Esophagus muscularis mucosa (tissue), 4 donors: ENCODE measurements at regions of chr12 and their contacts with region 1.

Region 1: GRCh38 chr12:98424726-98425401 is 90.5 kb upstream of the TMPO start:
- DNase-seq: peak; percentile 92
- H3K4me3 ChIP-seq: no peak overlapping the region
- H3K27ac ChIP-seq: no peak overlapping the region
- H3K4me1 ChIP-seq: peaks cover 5 to 18% (median 17%) of the 10 kb centered on the region in 4 donors
- H3K27me3 ChIP-seq: no peaks in the 10 kb centered on the region
- CTCF ChIP-seq: peak; percentile 65 to 76 (median 72)
- EP300 ChIP-seq: no peak
- POLR2A ChIP-seq: no peak

Region 2: GRCh38 chr12:98475565-98475908 is 50.7 kb after region 1 on chr12:
- intact Hi-C with region 1: no loop called
- DNase-seq: no peak
- H3K4me3 ChIP-seq: no peak overlapping the region
- H3K27ac ChIP-seq: peak overlapping the region; percentile 22 to 76 (median 65)
- H3K4me1 ChIP-seq: peaks cover 0 to 14% (median 11%) of the 10 kb centered on the region in 4 donors
- H3K27me3 ChIP-seq: no peaks in the 10 kb centered on the region
- CTCF ChIP-seq: no peak
- EP300 ChIP-seq: no peak
- POLR2A ChIP-seq: no peak

Region 3: DNA sequence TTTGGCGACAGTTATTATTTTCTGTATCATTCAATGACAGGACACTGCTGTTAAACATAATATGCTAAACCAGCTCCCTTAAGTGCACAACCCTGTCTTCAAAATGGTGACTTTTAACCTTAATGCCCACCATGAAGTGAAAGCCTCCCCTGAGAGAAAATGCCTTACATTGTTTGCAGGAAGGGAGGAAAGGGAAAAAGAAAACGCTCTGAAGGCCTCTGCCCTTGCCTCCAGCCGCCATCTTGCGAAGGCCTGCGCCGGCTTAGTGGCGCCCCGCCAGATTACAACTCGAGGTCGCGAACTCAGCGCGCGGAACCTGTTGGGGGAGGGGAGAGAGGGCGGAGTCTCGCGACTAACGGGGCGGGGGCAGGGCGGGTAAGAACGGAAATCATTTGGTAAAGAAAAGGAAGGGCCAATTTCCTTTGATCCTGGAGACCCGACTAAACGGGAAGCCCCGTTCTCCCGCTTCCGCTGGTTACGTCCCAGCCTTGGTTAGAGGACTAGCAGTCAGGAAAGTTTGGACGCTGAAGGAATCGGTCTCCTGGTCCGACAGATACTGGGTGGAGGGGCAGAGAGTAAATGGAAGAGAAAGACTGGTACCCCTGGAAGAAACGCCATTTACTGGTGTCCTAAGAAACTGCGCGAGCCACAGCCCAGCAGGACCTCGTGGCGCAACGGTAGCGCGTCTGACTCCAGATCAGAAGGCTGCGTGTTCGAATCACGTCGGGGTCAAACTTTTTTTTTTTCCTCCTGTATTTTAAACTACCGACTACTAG is 78.9 kb after region 1 on chr12:
- intact Hi-C with region 1: no loop called
- DNase-seq: peak; percentile 99
- H3K4me3 ChIP-seq: peak overlapping the region; percentile 68 to 74 (median 70)
- H3K27ac ChIP-seq: peak overlapping the region; percentile 92 to 97 (median 96)
- H3K4me1 ChIP-seq: peaks cover 0 to 10% (median 6%) of the 10 kb centered on the region in 4 donors
- H3K27me3 ChIP-seq: peaks cover 0 to 3% (median 0%) of the 10 kb centered on the region in 4 donors
- CTCF ChIP-seq: no peak
- EP300 ChIP-seq: no peak
- POLR2A ChIP-seq: no peak

Region 4: DNA sequence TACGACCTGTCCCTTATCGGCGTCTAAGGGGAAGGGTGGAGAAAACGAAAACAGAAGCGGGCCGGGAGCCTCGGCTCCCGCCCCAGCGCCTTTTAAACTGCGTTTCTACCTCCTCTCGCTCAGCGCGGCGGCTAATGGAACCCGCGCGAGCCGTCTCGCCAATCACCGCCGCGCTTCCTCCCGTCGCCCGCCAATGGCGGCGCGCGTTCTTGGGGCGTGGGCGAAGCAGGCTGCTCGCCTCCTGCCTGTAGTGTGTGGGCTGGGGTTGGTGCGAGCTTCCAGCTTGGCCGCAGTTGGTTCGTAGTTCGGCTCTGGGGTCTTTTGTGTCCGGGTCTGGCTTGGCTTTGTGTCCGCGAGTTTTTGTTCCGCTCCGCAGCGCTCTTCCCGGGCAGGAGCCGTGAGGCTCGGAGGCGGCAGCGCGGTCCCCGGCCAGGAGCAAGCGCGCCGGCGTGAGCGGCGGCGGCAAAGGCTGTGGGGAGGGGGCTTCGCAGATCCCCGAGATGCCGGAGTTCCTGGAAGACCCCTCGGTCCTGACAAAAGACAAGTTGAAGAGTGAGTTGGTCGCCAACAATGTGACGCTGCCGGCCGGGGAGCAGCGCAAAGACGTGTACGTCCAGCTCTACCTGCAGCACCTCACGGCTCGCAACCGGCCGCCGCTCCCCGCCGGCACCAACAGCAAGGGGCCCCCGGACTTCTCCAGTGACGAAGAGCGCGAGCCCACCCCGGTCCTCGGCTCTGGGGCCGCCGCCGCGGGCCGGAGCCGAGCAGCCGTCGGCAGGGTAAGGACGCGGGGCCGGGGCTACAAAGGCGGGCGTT is 90.7 kb after region 1 on chr12 and contains the start of gene TMPO:
- intact Hi-C with region 1: loop called (anchors 2 kb)
- DNase-seq: peak; percentile 98
- H3K4me3 ChIP-seq: peak within 1 kb of the TSS; percentile 63 to 97 (median 86)
- H3K27ac ChIP-seq: peak within 1 kb of the TSS; percentile 89 to 97 (median 94)
- H3K4me1 ChIP-seq: peaks cover 21 to 45% (median 40%) of the 10 kb centered on the region in 4 donors
- H3K27me3 ChIP-seq: no peaks in the 10 kb centered on the region
- CTCF ChIP-seq: peak in 1 of 3 experiments; percentile 35
- EP300 ChIP-seq: no peak
- POLR2A ChIP-seq: peak; percentile 47
- total RNA-seq, gene TMPO: 37.1 to 54.8 (median 49.8) TPM